Ascending aorta (tissue), 2 donors: ENCODE measurements at regions of chr13 and their contacts with region 1.

Region 1: DNA sequence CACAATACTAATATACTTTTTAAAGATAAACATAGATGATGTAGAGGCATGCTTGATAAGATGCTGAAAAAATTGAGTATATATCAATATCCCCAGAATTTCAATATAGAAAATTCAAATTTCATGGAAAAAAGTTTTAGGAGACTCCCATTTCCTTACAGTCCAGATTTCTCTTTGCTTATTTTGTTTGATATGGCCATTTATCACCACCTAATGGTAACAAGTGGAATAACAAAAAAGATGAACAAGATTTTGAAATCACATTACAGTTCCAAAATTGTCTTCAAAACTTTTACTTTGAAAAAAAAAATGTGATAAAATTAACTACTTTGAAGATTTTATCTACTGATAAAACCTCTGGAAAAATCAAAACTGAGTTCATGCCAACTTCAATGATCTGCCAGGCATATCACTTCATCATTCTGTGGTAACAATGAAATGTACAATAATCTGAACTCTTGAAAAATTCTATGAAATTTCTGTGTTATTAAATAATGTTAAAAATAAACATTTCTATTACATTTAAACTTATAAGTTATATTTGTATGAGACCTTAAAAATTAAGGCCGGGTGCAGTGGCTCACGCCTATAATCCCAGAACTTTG is 17.5 kb downstream of the MIPEP start:
- DNase-seq: no peak
- H3K4me3 ChIP-seq: no peak overlapping the region
- H3K27ac ChIP-seq: no peak overlapping the region
- H3K4me1 ChIP-seq: no peaks in the 10 kb centered on the region
- H3K27me3 ChIP-seq: no peaks in the 10 kb centered on the region
- CTCF ChIP-seq: peak; percentile 34 to 58 (median 38)

Region 2: DNA sequence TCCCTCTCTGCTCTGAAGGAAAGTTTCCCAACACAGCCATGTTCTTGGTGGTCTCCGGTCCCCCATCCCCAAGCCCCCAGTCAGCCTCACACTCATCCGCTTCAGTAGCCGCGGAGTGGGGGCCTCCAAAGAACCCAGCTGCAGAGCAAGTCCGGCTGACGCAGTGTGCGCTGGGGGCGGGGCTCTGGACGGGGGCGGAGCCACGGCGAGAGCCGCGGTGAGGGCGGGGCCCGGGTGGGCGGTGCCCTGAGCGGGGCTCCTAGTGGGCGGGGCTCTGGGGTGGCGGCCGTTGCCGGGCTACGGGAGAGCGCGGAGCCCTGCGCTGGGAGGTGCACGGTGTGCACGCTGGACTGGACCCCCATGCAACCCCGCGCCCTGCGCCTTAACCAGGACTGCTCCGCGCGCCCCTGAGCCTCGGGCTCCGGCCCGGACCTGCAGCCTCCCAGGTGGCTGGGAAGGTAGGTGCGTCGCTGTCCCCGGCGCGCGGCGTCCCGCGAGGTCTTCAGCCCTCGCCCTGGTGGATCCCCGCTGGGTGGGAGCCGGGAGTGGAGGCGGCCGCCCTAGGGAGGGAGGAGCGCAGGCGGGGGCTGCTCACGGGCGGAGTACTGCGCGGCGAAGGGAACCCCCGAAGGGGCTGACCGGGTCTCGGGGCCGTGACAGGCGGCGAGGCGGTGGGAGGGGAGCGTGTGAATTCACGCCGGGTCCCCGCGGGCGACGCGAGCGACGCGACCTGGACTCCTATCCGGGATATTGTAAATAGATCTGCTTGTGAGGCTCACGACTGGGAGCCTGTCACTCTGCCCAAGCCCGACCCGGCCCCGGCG is 292.4 kb before region 1 on chr13:
- intact Hi-C with region 1: loop called (anchors 5 kb)
- DNase-seq: peak; percentile 32 to 92
- H3K4me3 ChIP-seq: peak overlapping the region; percentile 81 to 95
- H3K27ac ChIP-seq: peak overlapping the region in 1 of 2 donors; percentile 15
- H3K4me1 ChIP-seq: peaks cover 0 to 6% of the 10 kb centered on the region in 2 donors
- H3K27me3 ChIP-seq: peaks cover 7% of the 10 kb centered on the region
- CTCF ChIP-seq: no peak

Region 3: GRCh38 chr13:23715762-23716235 is 155.9 kb before region 1 on chr13:
- intact Hi-C with region 1: loop called (anchors 5 kb)
- DNase-seq: no peak
- H3K4me3 ChIP-seq: no peak overlapping the region
- H3K27ac ChIP-seq: no peak overlapping the region
- H3K4me1 ChIP-seq: no peaks in the 10 kb centered on the region
- H3K27me3 ChIP-seq: no peaks in the 10 kb centered on the region
- CTCF ChIP-seq: no peak

Region 4: GRCh38 chr13:23741879-23742510 is 129.7 kb before region 1 on chr13:
- intact Hi-C with region 1: no loop called
- DNase-seq: no peak
- H3K4me3 ChIP-seq: no peak overlapping the region
- H3K27ac ChIP-seq: no peak overlapping the region
- H3K4me1 ChIP-seq: no peaks in the 10 kb centered on the region
- H3K27me3 ChIP-seq: no peaks in the 10 kb centered on the region
- CTCF ChIP-seq: peak in 1 of 3 experiments; percentile 10

Region 5: DNA sequence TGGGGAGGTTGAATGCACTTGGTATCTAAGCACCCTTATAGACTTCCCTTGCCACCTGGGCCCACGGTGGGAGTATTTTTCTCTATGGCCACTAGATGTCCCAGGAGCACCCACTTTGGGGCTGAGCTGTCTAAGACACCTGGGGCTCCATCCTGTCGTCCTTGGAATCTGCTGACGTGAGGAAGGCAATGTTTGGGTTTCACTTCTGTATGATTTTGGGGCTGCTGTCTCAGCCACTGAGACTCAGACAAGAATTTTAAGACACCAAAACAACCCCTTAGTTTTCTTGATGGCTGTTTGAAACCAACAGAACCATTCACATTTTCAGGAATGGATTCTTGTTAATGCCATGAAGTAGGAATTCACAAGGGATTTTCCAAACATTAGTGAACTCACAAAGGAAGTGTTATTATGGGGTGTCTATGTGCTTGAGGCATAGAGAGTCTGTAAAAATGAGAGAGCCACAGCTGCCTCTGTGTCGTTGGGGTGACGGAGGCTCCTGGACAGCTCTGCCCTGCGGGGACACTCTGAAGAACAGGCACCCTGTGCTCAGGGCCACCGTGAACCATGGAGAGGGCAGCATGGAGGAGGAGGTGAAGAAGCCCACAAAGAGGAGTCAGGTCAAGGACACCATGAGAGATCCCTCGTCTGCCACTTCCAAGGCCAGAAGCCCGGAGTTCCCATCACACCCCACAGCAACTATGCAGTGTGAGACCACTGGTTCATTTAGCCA is 182.0 kb after region 1 on chr13:
- intact Hi-C with region 1: no loop called
- DNase-seq: no peak
- H3K4me3 ChIP-seq: peak overlapping the region in 1 of 2 donors; percentile 49
- H3K27ac ChIP-seq: peak overlapping the region; percentile 58 to 69
- H3K4me1 ChIP-seq: peaks cover 0 to 20% of the 10 kb centered on the region in 2 donors
- H3K27me3 ChIP-seq: no peaks in the 10 kb centered on the region
- CTCF ChIP-seq: peak; percentile 45 to 60 (median 51)

Region 6: DNA sequence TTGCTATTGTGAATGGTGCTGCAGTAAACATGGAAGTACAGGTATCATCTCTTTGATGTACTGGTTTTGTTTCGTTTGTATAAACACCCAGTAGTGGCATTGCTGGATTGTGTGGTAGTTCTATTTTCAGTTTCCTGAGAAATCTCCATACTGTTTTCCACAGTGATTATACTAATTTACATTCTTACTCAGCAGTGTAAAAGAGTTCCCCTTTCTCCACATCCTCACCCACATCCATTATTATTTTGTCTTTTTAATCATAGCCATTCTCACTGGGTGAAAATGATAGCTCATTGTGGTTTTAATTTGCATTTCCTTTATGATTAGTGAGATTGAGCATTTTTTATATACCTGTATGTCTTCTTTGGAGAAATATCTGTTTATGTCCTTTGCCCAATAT is 703.1 kb after region 1 on chr13:
- intact Hi-C with region 1: no loop called
- DNase-seq: no peak
- H3K4me3 ChIP-seq: no peak overlapping the region
- H3K27ac ChIP-seq: no peak overlapping the region
- H3K4me1 ChIP-seq: no peaks in the 10 kb centered on the region
- H3K27me3 ChIP-seq: no peaks in the 10 kb centered on the region
- CTCF ChIP-seq: no peak